ENCODE measurements at regions of chr11 and their contacts with region 1.

Region 1: GRCh38 chr11:27485930-27486773 is 13.6 kb upstream of the LGR4 start:
- DNase-seq: peak in 7 of 9 donors; percentile 32 to 55 (median 51)
- ATAC-seq: peak; percentile 69
- H3K4me3 ChIP-seq: no peak overlapping the region
- H3K4me3 Mint-ChIP-seq: no peak overlapping the region
- H3K27ac ChIP-seq: no peak overlapping the region
- H3K27ac Mint-ChIP-seq: no peak overlapping the region
- H3K4me1 ChIP-seq: no peaks in the 10 kb centered on the region
- H3K4me1 Mint-ChIP-seq: peaks cover 0 to 5% (median 0%) of the 10 kb centered on the region in 7 donors
- H3K27me3 ChIP-seq: no peaks in the 10 kb centered on the region
- H3K27me3 Mint-ChIP-seq: no peaks in the 10 kb centered on the region

Region 2: GRCh38 chr11:26283852-26284408 is 1202.2 kb before region 1 on chr11:
- CTCF ChIA-PET with region 1: no interaction called
- POLR2A ChIA-PET with region 1: no interaction called
- intact Hi-C with region 1: loop called (anchors 1 to 2 kb)
- DNase-seq: no peak
- ATAC-seq: no peak
- H3K4me3 ChIP-seq: no peak overlapping the region
- H3K4me3 Mint-ChIP-seq: peak overlapping the region; percentile 12 to 74 (median 53)
- H3K27ac ChIP-seq: no peak overlapping the region
- H3K27ac Mint-ChIP-seq: peak overlapping the region in 2 of 9 donors; percentile 2 to 3
- H3K4me1 ChIP-seq: no peaks in the 10 kb centered on the region
- H3K4me1 Mint-ChIP-seq: peaks cover 4 to 11% (median 10%) of the 10 kb centered on the region in 7 donors
- H3K27me3 ChIP-seq: no peaks in the 10 kb centered on the region
- H3K27me3 Mint-ChIP-seq: peaks cover 5 to 16% (median 9%) of the 10 kb centered on the region in 5 donors

Region 3: GRCh38 chr11:26964339-26964738 is 521.8 kb before region 1 on chr11:
- CTCF ChIA-PET with region 1: no interaction called
- POLR2A ChIA-PET with region 1: no interaction called
- intact Hi-C with region 1: no loop called
- DNase-seq: no peak
- ATAC-seq: no peak
- H3K4me3 ChIP-seq: no peak overlapping the region
- H3K4me3 Mint-ChIP-seq: no peak overlapping the region
- H3K27ac ChIP-seq: no peak overlapping the region
- H3K27ac Mint-ChIP-seq: no peak overlapping the region
- H3K4me1 ChIP-seq: no peaks in the 10 kb centered on the region
- H3K4me1 Mint-ChIP-seq: no peaks in the 10 kb centered on the region
- H3K27me3 ChIP-seq: no peaks in the 10 kb centered on the region
- H3K27me3 Mint-ChIP-seq: no peaks in the 10 kb centered on the region

Region 4: DNA sequence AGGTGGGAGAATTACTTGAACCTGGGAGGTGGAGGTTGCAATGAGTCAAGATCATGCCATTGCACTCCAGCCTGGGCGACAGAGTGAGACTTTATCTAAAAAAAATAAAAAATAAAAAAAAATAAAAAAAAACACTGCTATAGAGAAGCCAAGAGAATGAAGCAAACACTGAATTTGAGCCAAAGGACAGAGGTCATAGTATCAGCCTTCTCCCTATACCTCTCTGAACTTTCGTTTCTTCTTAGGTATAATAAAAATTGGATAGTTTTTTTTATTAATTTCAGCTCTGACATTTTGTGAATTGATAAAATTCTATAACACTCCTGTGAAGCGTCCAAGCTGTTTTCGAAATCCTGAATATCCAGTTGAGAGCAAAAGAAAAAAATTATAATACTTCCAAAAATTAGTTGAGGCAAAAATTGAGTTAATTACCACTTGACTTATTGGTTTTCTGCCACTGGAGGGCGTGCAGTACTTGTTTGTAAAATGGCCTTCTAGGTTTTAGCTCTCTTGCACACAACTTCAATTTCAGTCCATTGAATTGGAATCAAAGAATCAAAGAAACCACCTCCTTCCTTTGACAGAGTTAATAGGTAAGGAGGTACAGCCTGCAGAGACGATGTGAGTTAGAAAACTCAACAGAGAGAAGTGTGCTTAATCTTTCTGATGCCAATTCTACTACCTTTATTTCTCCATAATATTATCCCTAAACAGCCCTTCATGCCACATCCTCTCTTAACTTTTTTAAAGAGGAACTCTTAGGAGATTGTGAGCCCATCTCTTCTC is 302.3 kb before region 1 on chr11:
- CTCF ChIA-PET with region 1: interaction called, 66 read pairs
- POLR2A ChIA-PET with region 1: no interaction called
- intact Hi-C with region 1: loop called (anchors 1 kb)
- DNase-seq: peak in 7 of 9 donors; percentile 14 to 45 (median 29)
- ATAC-seq: peak; percentile 46
- H3K4me3 ChIP-seq: no peak overlapping the region
- H3K4me3 Mint-ChIP-seq: no peak overlapping the region
- H3K27ac ChIP-seq: no peak overlapping the region
- H3K27ac Mint-ChIP-seq: no peak overlapping the region
- H3K4me1 ChIP-seq: no peaks in the 10 kb centered on the region
- H3K4me1 Mint-ChIP-seq: no peaks in the 10 kb centered on the region
- H3K27me3 ChIP-seq: no peaks in the 10 kb centered on the region
- H3K27me3 Mint-ChIP-seq: peaks cover 3 to 19% (median 16%) of the 10 kb centered on the region in 5 donors

Region 5: DNA sequence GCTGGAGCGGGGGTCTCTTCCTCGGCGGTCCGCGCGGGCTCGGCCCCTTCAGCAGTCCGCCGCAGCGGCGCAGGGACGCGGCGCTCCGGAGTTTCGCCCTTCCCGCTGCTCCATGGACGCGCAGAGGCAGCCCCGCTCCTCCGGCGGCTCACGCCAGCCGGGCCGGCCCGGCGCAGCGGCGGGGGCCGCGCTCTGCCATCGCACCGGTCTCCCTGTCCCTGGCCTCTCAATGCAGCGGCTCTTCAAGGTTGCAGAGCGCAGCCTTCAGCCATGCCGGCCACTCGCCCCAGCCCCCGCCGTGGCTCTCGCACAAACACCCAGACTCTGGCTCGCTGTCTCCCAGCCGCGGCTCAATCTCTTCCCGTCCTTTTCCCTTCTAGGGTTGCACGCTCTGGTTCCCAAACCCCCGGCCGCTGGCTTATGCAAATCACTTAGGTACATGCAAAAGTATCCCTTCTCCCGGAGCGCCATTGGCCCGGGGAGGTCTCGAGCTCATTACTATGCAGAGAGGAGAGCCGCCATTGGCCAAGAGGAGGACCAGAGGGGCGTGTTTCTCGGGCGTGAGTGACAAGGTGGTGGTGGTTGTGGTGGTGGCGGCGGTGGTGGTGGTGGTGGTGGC is 13.6 kb before region 1 on chr11 and contains the start of gene LGR4:
- CTCF ChIA-PET with region 1: interaction called, 8 read pairs
- POLR2A ChIA-PET with region 1: interaction called, 3 read pairs
- intact Hi-C with region 1: loop called in 1 of 2 experiments (anchors 1 kb)
- DNase-seq: peak; percentile 33 to 79 (median 70)
- ATAC-seq: peak; percentile 90
- H3K4me3 ChIP-seq: peak within 1 kb of the TSS; percentile 73
- H3K4me3 Mint-ChIP-seq: peak within 1 kb of the TSS; percentile 88 to 98 (median 96)
- H3K27ac ChIP-seq: peak within 1 kb of the TSS; percentile 33
- H3K27ac Mint-ChIP-seq: peak within 1 kb of the TSS; percentile 18 to 90 (median 77)
- H3K4me1 ChIP-seq: peaks cover 4 to 10% of the 10 kb centered on the region in 2 donors
- H3K4me1 Mint-ChIP-seq: peaks cover 6 to 29% (median 21%) of the 10 kb centered on the region in 7 donors
- H3K27me3 ChIP-seq: no peaks in the 10 kb centered on the region
- H3K27me3 Mint-ChIP-seq: peaks cover 0 to 59% (median 7%) of the 10 kb centered on the region in 5 donors
- total RNA-seq, gene LGR4: 0.05 to 1.5 (median 0.95) TPM

Region 6: DNA sequence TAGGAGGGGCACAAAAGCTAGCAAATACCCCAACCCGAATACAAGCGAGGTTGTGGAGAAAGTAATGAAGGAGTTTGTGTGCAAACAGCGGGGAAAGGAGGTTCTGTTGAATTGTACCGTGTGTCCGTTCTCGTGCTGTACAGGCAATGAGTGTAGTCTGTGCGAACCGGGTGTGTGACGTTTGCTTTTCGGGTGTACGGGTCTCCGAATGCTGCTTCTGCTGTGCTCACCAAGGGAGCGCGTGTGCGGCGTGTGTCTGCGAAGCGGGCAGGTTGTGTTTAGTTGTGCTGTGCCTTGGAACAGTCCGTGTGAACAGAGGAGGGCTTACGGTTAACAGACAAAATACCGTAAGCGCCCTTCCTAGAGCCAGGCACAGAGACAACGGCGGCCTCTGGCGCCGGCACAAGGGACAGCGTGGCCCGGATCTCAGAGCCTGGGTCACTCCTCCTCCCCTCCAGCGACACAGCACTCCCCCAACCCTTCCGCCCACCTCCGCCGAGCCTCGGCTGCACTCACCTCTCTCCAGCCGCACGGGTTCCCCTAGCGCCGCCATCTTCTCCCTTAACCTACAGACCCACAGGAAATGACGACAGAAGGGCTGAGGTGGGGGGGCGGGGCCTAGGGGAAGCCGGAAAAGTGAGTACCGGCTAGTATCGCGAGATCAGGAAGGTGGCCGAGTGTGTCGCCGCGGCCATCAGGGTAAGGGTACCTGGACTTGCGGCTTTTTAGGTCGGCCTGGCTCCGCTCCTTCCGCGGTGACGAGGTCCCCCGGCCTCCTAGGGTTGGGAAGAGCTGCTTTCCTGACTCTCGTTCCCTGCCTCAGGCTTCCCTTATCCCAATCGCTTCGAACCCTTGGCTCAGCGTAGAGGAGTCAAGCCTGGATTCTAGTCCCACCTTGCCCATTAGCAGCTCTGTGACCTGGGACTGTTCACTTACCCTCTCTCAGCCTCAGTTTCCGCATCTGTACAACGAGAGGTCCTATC is 20.3 kb after region 1 on chr11 and contains the start of gene LIN7C:
- CTCF ChIA-PET with region 1: interaction called, 3 read pairs
- POLR2A ChIA-PET with region 1: no interaction called
- intact Hi-C with region 1: loop called in 1 of 2 experiments (anchors 2 kb)
- DNase-seq: peak; percentile 69 to 98 (median 90)
- ATAC-seq: peak; percentile 95
- H3K4me3 ChIP-seq: peak within 1 kb of the TSS; percentile 92
- H3K4me3 Mint-ChIP-seq: peak within 1 kb of the TSS; percentile 88 to 100 (median 99)
- H3K27ac ChIP-seq: peak within 1 kb of the TSS; percentile 89
- H3K27ac Mint-ChIP-seq: peak within 1 kb of the TSS; percentile 96 to 100 (median 99)
- H3K4me1 ChIP-seq: peaks cover 18 to 34% of the 10 kb centered on the region in 2 donors
- H3K4me1 Mint-ChIP-seq: peaks cover 32 to 71% (median 61%) of the 10 kb centered on the region in 7 donors
- H3K27me3 ChIP-seq: no peaks in the 10 kb centered on the region
- H3K27me3 Mint-ChIP-seq: no peaks in the 10 kb centered on the region
- total RNA-seq, gene LIN7C: 21.4 to 31.3 (median 25.4) TPM

Measured in naive thymus-derived CD4-positive, alpha-beta T cell (primary cell).